Naive thymus-derived CD4-positive, alpha-beta T cell (primary cell): ENCODE measurements at regions of chr7 and their contacts with region 1.

Region 1: GRCh38 chr7:138752568-138753518 is 45.0 kb upstream of the TMEM213 start:
- DNase-seq: peak; percentile 66 to 99 (median 96)
- ATAC-seq: peak; percentile 95
- H3K4me3 ChIP-seq: no peak overlapping the region
- H3K4me3 Mint-ChIP-seq: peak overlapping the region; percentile 61 to 81 (median 72)
- H3K27ac ChIP-seq: peak overlapping the region; percentile 60
- H3K27ac Mint-ChIP-seq: peak overlapping the region; percentile 89 to 99 (median 96)
- H3K4me1 ChIP-seq: peaks cover 22 to 25% of the 10 kb centered on the region in 2 donors
- H3K4me1 Mint-ChIP-seq: peaks cover 34 to 78% (median 61%) of the 10 kb centered on the region in 7 donors
- H3K27me3 ChIP-seq: no peaks in the 10 kb centered on the region
- H3K27me3 Mint-ChIP-seq: peaks cover 0 to 4% (median 0%) of the 10 kb centered on the region in 5 donors

Region 2: GRCh38 chr7:137934941-137935883 is 817.6 kb before region 1 on chr7:
- CTCF ChIA-PET with region 1: no interaction called
- POLR2A ChIA-PET with region 1: no interaction called
- intact Hi-C with region 1: loop called in 1 of 2 experiments (anchors 5 kb)
- DNase-seq: peak in 6 of 9 donors; percentile 12 to 52 (median 35)
- ATAC-seq: peak; percentile 80
- H3K4me3 ChIP-seq: peak overlapping the region; percentile 45
- H3K4me3 Mint-ChIP-seq: peak overlapping the region; percentile 68 to 92 (median 86)
- H3K27ac ChIP-seq: peak overlapping the region; percentile 70
- H3K27ac Mint-ChIP-seq: peak overlapping the region; percentile 89 to 99 (median 96)
- H3K4me1 ChIP-seq: peaks cover 12 to 20% of the 10 kb centered on the region in 2 donors
- H3K4me1 Mint-ChIP-seq: peaks cover 31 to 50% (median 42%) of the 10 kb centered on the region in 7 donors
- H3K27me3 ChIP-seq: no peaks in the 10 kb centered on the region
- H3K27me3 Mint-ChIP-seq: no peaks in the 10 kb centered on the region

Region 3: GRCh38 chr7:138195151-138195585 is 557.7 kb before region 1 on chr7:
- CTCF ChIA-PET with region 1: no interaction called
- POLR2A ChIA-PET with region 1: no interaction called
- intact Hi-C with region 1: no loop called
- DNase-seq: no peak
- ATAC-seq: no peak
- H3K4me3 ChIP-seq: no peak overlapping the region
- H3K4me3 Mint-ChIP-seq: no peak overlapping the region
- H3K27ac ChIP-seq: no peak overlapping the region
- H3K27ac Mint-ChIP-seq: no peak overlapping the region
- H3K4me1 ChIP-seq: no peaks in the 10 kb centered on the region
- H3K4me1 Mint-ChIP-seq: peaks cover 0 to 5% (median 0%) of the 10 kb centered on the region in 7 donors
- H3K27me3 ChIP-seq: no peaks in the 10 kb centered on the region
- H3K27me3 Mint-ChIP-seq: peaks cover 2 to 23% (median 14%) of the 10 kb centered on the region in 5 donors

Region 4: GRCh38 chr7:138625849-138626230 is 127.0 kb before region 1 on chr7:
- CTCF ChIA-PET with region 1: no interaction called
- POLR2A ChIA-PET with region 1: interaction called, 9 read pairs
- intact Hi-C with region 1: loop called in 1 of 2 experiments (anchors 10 kb)
- DNase-seq: peak in 6 of 9 donors; percentile 4 to 51 (median 39)
- ATAC-seq: peak; percentile 69
- H3K4me3 ChIP-seq: peak overlapping the region; percentile 18
- H3K4me3 Mint-ChIP-seq: peak overlapping the region; percentile 50 to 83 (median 72)
- H3K27ac ChIP-seq: peak overlapping the region; percentile 46
- H3K27ac Mint-ChIP-seq: peak overlapping the region; percentile 71 to 92 (median 85)
- H3K4me1 ChIP-seq: peaks cover 17 to 30% of the 10 kb centered on the region in 2 donors
- H3K4me1 Mint-ChIP-seq: peaks cover 16 to 55% (median 47%) of the 10 kb centered on the region in 7 donors
- H3K27me3 ChIP-seq: no peaks in the 10 kb centered on the region
- H3K27me3 Mint-ChIP-seq: peaks cover 0 to 8% (median 0%) of the 10 kb centered on the region in 5 donors

Region 5: GRCh38 chr7:138865843-138866242 is 113.0 kb after region 1 on chr7:
- CTCF ChIA-PET with region 1: no interaction called
- POLR2A ChIA-PET with region 1: no interaction called
- intact Hi-C with region 1: loop called (anchors 1 kb)
- DNase-seq: peak in 8 of 9 donors; percentile 21 to 62 (median 49)
- ATAC-seq: peak; percentile 84
- H3K4me3 ChIP-seq: no peak overlapping the region
- H3K4me3 Mint-ChIP-seq: no peak overlapping the region
- H3K27ac ChIP-seq: no peak overlapping the region
- H3K27ac Mint-ChIP-seq: peak overlapping the region in 7 of 9 donors; percentile 0 to 69 (median 40)
- H3K4me1 ChIP-seq: no peaks in the 10 kb centered on the region
- H3K4me1 Mint-ChIP-seq: peaks cover 0 to 18% (median 7%) of the 10 kb centered on the region in 7 donors
- H3K27me3 ChIP-seq: no peaks in the 10 kb centered on the region
- H3K27me3 Mint-ChIP-seq: peaks cover 0 to 4% (median 2%) of the 10 kb centered on the region in 5 donors

Region 6: DNA sequence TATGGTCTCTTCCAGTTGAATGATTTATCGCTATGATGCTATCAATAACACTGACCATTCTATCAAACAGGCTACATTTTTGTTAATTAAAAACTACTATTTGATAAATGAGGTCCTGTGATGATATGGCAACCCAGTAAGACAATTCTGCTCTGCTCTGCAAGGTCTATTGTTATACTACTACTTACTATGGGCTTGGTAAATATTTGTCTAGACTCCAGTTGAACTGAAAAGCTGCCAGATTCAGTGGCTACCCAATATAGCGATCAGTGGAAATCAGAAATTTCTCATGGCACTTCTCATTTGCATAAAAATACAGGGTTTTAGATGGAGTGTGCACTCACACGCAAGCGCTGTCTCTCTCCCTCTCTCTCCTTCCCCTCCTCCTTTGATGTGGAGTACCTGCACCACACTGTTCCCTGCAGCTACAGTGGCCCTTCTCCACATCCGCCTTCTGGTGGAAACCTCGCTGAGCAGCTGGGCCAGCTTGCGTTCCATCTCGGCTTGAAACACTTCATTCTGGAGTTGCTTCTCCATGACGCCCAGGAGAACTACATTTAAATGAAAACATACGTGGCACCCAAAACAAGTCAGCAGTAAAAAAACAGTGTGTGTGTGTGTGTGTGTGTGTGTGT is 150.5 kb after region 1 on chr7:
- CTCF ChIA-PET with region 1: no interaction called
- POLR2A ChIA-PET with region 1: interaction called, 7 read pairs
- intact Hi-C with region 1: loop called (anchors 1 kb)
- DNase-seq: peak; percentile 29 to 94 (median 90)
- ATAC-seq: peak; percentile 98
- H3K4me3 ChIP-seq: peak overlapping the region; percentile 38
- H3K4me3 Mint-ChIP-seq: peak overlapping the region; percentile 69 to 94 (median 82)
- H3K27ac ChIP-seq: no peak overlapping the region
- H3K27ac Mint-ChIP-seq: peak overlapping the region; percentile 17 to 97 (median 87)
- H3K4me1 ChIP-seq: peaks cover 20 to 36% of the 10 kb centered on the region in 2 donors
- H3K4me1 Mint-ChIP-seq: peaks cover 25 to 66% (median 56%) of the 10 kb centered on the region in 7 donors
- H3K27me3 ChIP-seq: no peaks in the 10 kb centered on the region
- H3K27me3 Mint-ChIP-seq: peaks cover 0 to 59% (median 5%) of the 10 kb centered on the region in 5 donors

Region 7: DNA sequence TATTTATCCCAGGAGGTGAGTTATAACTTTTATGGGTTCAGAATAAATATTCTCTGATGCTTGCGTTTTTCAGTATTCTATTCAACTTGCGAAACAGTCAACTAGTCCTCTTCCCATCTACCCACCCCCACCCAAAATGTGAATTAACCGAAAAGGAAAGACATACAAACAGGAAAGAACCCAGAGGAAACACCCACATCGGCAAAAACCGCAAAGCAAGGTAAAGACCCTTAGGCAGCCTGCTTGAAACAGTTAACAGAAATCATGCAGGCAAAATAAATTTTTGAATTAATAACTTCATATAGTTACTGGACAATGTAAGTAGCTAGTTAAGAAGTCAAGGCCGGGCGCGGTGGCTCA is 351.2 kb after region 1 on chr7:
- CTCF ChIA-PET with region 1: no interaction called
- POLR2A ChIA-PET with region 1: no interaction called
- intact Hi-C with region 1: loop called (anchors 2 to 10 kb)
- DNase-seq: peak in 5 of 9 donors; percentile 41 to 55 (median 51)
- ATAC-seq: no peak
- H3K4me3 ChIP-seq: peak overlapping the region; percentile 80
- H3K4me3 Mint-ChIP-seq: peak overlapping the region; percentile 88 to 100 (median 96)
- H3K27ac ChIP-seq: peak overlapping the region; percentile 93
- H3K27ac Mint-ChIP-seq: peak overlapping the region; percentile 83 to 95 (median 92)
- H3K4me1 ChIP-seq: peaks cover 13 to 16% of the 10 kb centered on the region in 2 donors
- H3K4me1 Mint-ChIP-seq: peaks cover 22 to 46% (median 34%) of the 10 kb centered on the region in 7 donors
- H3K27me3 ChIP-seq: no peaks in the 10 kb centered on the region
- H3K27me3 Mint-ChIP-seq: peaks cover 0 to 2% (median 0%) of the 10 kb centered on the region in 5 donors

Region 8: GRCh38 chr7:140479062-140479738 is 1726.4 kb after region 1 on chr7 and contains the start of gene MKRN1:
- CTCF ChIA-PET with region 1: no interaction called
- POLR2A ChIA-PET with region 1: no interaction called
- intact Hi-C with region 1: loop called in 1 of 2 experiments (anchors 5 kb)
- DNase-seq: peak; percentile 87 to 93 (median 92)
- ATAC-seq: peak; percentile 93
- H3K4me3 ChIP-seq: peak within 1 kb of the TSS; percentile 84
- H3K4me3 Mint-ChIP-seq: peak within 1 kb of the TSS; percentile 90 to 100 (median 98)
- H3K27ac ChIP-seq: peak within 1 kb of the TSS; percentile 89
- H3K27ac Mint-ChIP-seq: peak within 1 kb of the TSS; percentile 92 to 99 (median 99)
- H3K4me1 ChIP-seq: peaks cover 21 to 28% of the 10 kb centered on the region in 2 donors
- H3K4me1 Mint-ChIP-seq: peaks cover 13 to 35% (median 25%) of the 10 kb centered on the region in 7 donors
- H3K27me3 ChIP-seq: no peaks in the 10 kb centered on the region
- H3K27me3 Mint-ChIP-seq: peaks cover 0 to 15% (median 0%) of the 10 kb centered on the region in 5 donors
- total RNA-seq, gene MKRN1: 85.1 to 162 (median 144) TPM